ENCODE measurements at regions of chr2 and their contacts with region 1.

Region 1: DNA sequence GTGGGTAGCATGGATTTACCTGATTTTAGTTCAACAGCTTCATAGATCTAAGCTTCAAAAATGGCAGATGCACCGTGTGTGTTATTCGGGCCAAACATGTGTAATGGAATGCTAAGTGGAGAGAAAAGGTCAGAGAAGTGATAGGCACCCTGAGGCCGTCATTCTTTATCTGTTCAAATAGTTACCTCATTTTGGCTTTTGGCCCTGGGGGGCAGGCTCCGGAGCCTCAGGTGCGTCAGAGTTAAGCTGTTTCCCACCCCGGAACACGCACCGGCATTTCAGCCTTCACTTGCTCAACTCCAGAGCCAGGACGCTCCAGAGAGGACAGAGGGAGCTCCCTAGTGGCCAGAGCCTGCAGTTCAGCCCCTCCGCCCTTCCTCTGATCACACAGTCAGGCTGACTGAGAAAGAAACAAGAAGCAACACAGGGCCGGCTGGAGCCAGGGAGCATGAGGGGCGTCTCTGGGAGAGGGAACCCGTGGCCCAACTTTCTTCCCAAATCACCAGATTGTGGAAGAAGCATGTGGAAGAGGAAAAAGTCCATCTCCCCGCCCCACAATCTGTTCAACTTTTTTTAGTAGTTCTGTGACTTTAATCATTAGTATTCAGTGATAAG is 135.2 kb upstream of the EPC2 start:
- DNase-seq: peak; percentile 77 to 87
- ATAC-seq: peak; percentile 91 to 100 (median 99)
- H3K4me3 ChIP-seq: peak overlapping the region; percentile 54
- H3K27ac ChIP-seq: no peak overlapping the region
- H3K4me1 ChIP-seq: no peaks in the 10 kb centered on the region
- H3K27me3 ChIP-seq: no peaks in the 10 kb centered on the region
- CTCF ChIP-seq: peak; percentile 81

Region 2: DNA sequence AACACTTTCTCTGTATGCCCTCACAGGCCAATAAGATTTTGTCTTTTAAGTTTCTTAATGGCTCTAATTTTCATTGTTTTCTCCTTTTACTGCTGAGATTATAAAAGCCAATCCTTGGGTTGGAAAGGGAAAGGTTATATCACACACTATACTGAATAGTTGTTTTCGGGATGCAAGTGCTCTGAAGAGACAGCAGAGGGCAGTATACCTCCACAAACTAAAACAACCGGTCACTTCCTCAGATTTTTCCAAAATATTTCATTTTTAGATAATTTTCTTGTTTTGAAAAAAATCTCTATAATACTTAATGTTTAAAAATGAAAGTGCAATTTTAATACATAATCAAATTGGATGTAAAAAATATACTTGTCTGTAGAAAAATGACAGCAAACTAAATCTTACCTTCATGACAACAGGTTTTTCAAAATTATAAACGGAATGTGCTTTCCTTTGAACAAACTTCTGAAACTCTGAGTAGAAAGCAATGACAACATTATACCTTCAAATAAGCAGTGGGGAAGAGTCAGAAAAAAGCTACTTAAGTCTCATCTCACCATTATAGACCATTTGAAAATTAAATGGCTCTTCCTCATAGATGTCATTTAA is 571.5 kb before region 1 on chr2:
- intact Hi-C with region 1: loop called (anchors 2 to 5 kb)
- DNase-seq: no peak
- ATAC-seq: peak in 3 of 4 donors; percentile 52 to 88 (median 75)
- H3K4me3 ChIP-seq: no peak overlapping the region
- H3K27ac ChIP-seq: no peak overlapping the region
- H3K4me1 ChIP-seq: no peaks in the 10 kb centered on the region
- H3K27me3 ChIP-seq: no peaks in the 10 kb centered on the region
- CTCF ChIP-seq: peak; percentile 85

Region 3: DNA sequence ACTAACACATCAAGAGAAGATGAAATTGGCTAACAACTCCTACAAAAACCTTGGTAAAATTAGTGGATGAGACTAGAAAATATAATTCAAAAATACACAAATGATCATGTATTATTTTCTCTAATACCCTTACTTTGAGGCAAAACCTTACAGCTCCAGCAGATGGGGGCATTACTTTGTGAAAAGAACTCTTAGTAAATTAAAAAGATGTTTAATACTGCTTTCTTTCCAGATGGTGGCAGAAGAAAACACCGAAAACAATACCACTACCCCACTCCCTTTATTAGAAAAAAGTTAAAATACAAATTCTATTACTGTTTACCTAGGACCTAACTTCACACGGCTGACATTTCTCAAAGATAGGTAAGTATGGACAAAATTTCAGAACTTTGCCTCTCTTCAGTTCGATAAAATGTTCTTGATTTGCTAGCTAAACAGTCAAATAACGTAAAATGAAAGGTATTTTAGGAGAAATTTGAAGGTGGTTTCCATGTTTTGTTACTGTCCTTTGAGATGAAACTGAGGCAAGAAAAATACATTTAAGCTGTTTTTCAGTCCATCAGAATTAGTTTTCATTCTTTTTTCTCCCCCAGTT is 519.5 kb before region 1 on chr2:
- intact Hi-C with region 1: loop called in 1 of 2 experiments (anchors 10 kb)
- DNase-seq: no peak
- ATAC-seq: peak in 2 of 4 donors; percentile 32 to 71
- H3K4me3 ChIP-seq: no peak overlapping the region
- H3K27ac ChIP-seq: no peak overlapping the region
- H3K4me1 ChIP-seq: peaks cover 11% of the 10 kb centered on the region
- H3K27me3 ChIP-seq: no peaks in the 10 kb centered on the region
- CTCF ChIP-seq: peak; percentile 64

Region 4: DNA sequence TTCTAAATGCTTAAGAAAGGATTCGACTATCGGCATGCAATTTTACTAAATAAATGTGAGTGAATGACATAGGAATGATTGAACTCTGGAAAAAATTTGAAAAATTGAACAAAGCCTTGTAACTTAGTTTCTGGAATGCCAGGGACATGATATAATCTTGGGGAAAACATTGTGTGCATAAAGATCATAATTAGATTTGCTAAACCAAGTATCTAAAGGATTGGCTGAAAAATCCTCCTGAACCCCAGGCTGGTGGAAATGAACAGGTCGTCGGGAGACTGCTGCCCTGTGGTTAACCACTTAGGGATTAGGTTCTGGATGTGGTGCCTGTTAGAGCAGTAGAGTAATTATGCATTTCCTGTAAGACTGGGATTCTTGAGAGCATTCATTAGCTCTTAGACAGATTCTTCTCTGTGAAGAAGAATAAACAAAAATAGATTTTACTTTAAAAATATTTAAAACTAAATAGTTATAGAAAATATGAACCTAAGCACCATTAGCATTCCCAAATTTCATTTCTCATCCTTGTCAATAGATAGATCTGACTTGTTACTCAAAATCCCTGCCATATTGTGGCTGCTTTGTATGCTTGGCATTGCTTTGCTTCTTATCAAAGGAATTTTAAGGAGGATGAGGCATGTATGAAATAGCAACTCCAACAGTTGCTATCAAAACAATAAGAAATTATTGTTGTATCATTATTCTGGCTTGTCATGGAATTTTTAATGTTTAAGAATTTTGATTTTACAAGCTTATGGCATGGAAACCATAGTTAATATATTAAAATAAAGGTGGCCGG is 585.0 kb after region 1 on chr2:
- intact Hi-C with region 1: no loop called
- DNase-seq: no peak
- ATAC-seq: no peak
- H3K4me3 ChIP-seq: no peak overlapping the region
- H3K27ac ChIP-seq: no peak overlapping the region
- H3K4me1 ChIP-seq: no peaks in the 10 kb centered on the region
- H3K27me3 ChIP-seq: peaks cover 0 to 5% (median 0%) of the 10 kb centered on the region in 3 donors
- CTCF ChIP-seq: no peak